Mammary epithelial cell (primary cell): ENCODE measurements at regions of chr9 and their contacts with region 1.

Region 1: DNA sequence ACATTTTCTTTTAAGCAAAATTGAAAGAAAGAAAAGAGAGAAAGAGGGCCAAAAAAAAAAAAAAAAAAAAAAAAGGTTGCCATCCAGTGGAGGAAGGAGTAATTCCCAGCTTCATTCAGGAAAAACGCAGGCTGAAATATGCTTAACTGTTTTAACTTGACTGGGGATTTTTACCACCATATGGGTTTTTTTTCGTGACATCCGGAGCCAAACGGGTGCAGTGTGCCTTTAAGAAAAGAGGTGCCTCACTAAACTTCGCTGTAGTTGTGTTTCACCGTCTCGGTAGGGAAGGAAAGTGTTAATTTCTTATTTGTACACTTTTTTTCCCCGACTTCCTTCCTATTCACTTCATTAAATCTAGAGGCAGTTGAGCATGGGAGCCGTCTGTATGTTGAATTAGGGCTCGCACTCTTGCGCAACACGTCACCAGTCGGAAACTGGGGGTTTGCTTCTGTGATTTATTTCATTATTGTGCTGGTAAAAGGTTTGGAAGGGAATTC is 143.0 kb downstream of the SMARCA2 start:
- DNase-seq: peak; percentile 76
- H3K4me3 ChIP-seq: peak overlapping the region; percentile 49 to 77 (median 71)
- H3K27ac ChIP-seq: peak overlapping the region; percentile 84
- H3K4me1 ChIP-seq: peaks cover 42% of the 10 kb centered on the region
- H3K27me3 ChIP-seq: no peaks in the 10 kb centered on the region
- CTCF ChIP-seq: peak; percentile 2 to 7

Region 2: DNA sequence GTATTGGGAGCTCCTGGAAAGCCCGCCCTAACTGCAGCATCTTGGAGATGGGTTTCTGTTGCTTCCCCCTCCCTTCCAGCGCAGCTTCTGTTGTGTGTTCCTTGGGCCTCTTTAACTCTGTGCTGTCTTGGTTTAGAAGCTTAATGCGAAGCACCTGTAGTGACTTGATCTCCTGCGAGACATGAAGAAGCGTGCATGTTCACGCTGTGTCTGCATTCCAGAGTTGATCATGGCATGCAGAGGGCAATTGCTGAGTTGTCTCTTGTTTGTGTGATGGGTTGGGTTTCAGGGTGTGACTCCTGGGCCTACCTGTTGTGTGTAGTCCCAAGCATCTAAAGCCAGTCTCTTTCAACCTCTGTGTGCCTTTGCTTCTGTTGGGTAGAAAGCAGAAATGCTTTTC is 12.6 kb after region 1 on chr9:
- CTCF ChIA-PET with region 1: no interaction called
- dilution Hi-C with region 1: no loop called
- in situ Hi-C with region 1: no loop called
- intact Hi-C with region 1: loop called (anchors 1 kb)
- DNase-seq: peak; percentile 83
- H3K4me3 ChIP-seq: no peak overlapping the region
- H3K27ac ChIP-seq: peak overlapping the region; percentile 25
- H3K4me1 ChIP-seq: peaks cover 10% of the 10 kb centered on the region
- H3K27me3 ChIP-seq: no peaks in the 10 kb centered on the region
- CTCF ChIP-seq: no peak

Region 3: GRCh38 chr9:2199999-2200796 is 42.0 kb after region 1 on chr9:
- CTCF ChIA-PET with region 1: no interaction called
- dilution Hi-C with region 1: no loop called
- in situ Hi-C with region 1: no loop called
- intact Hi-C with region 1: no loop called
- DNase-seq: no peak
- H3K4me3 ChIP-seq: no peak overlapping the region
- H3K27ac ChIP-seq: no peak overlapping the region
- H3K4me1 ChIP-seq: no peaks in the 10 kb centered on the region
- H3K27me3 ChIP-seq: no peaks in the 10 kb centered on the region
- CTCF ChIP-seq: peak; percentile 1 to 4

Region 4: DNA sequence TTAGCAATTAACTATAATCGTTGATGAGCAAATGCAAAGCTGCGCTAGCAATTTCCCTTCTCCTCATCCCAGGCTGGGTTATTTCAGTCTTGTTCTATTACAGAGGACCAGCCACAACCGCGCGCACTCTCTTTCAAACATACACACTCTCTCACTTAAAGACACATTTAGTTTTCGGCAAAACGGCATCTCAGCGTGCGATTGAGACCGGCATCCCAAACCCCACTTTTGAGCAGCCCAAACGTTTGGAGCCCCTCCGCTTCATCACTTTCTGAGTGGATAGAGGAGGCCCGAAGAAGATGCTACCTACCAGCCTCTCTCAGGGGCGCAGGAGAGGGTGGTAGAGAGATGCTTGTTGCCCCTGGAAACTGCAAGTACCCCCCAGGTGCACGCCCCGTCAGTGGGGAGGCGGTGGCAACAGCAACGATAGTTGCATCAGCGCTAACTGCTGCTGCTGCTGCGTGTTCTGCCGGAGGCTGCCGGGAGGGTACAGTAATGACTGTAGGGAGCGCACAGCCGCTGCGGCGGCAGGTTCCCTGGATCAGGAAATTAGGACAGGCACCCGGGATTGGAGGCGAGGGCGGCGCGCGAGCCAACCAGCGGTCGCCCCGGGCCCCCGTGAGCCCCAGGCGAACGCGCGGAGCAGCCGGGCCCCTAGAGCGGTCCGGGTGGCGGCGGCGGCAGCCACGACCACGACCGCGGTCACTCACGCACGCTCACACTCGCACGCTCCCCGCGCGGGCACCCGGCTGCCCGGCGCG is 462.9 kb after region 1 on chr9:
- CTCF ChIA-PET with region 1: no interaction called
- dilution Hi-C with region 1: no loop called
- in situ Hi-C with region 1: no loop called
- intact Hi-C with region 1: loop called (anchors 10 kb)
- DNase-seq: peak; percentile 76
- H3K4me3 ChIP-seq: peak overlapping the region; percentile 66 to 86 (median 80)
- H3K27ac ChIP-seq: no peak overlapping the region
- H3K4me1 ChIP-seq: peaks cover 18% of the 10 kb centered on the region
- H3K27me3 ChIP-seq: no peaks in the 10 kb centered on the region
- CTCF ChIP-seq: no peak

Region 5: DNA sequence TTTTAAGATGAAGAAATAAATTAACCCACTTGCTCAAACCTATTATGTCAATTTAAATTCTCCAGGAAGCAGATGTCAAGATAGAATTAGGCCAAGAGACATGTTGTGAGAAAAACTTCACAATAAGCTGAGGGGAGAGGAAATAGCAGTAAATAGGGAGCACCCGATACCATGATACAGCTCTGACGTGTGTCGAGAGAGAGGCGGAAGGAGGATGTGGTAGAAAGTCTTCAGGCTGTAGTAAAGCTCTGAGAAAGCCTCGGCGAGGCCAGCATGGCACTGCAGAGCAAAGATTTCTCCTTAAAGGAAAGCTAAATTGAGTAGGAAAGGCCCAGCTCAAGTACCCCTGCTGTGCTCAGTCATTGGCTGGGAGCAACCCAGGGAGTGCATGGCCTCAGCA is 691.8 kb after region 1 on chr9:
- CTCF ChIA-PET with region 1: no interaction called
- dilution Hi-C with region 1: no loop called
- in situ Hi-C with region 1: no loop called
- intact Hi-C with region 1: loop called (anchors 2 kb)
- DNase-seq: no peak
- H3K4me3 ChIP-seq: no peak overlapping the region
- H3K27ac ChIP-seq: no peak overlapping the region
- H3K4me1 ChIP-seq: peaks cover 4% of the 10 kb centered on the region
- H3K27me3 ChIP-seq: peaks cover 2% of the 10 kb centered on the region
- CTCF ChIP-seq: no peak